MCF 10A (cell line): ENCODE measurements at regions of chr2 and their contacts with region 1.

Region 1: GRCh38 chr2:3480352-3481012 is 38.8 kb downstream of the ADI1 start:
- DNase-seq: no peak
- H3K4me3 Mint-ChIP-seq: no peak overlapping the region
- H3K27ac Mint-ChIP-seq: no peak overlapping the region
- H3K4me1 Mint-ChIP-seq: no peaks in the 10 kb centered on the region
- H3K27me3 Mint-ChIP-seq: no peaks in the 10 kb centered on the region
- CTCF ChIP-seq: no peak

Region 2: GRCh38 chr2:3470166-3470651 is 10.3 kb before region 1 on chr2:
- CTCF ChIA-PET with region 1: interaction called, 6 read pairs
- POLR2A ChIA-PET with region 1: interaction called, 14 read pairs
- intact Hi-C with region 1: no loop called
- DNase-seq: peak; percentile 82
- H3K4me3 Mint-ChIP-seq: peak overlapping the region; percentile 66
- H3K27ac Mint-ChIP-seq: peak overlapping the region; percentile 95
- H3K4me1 Mint-ChIP-seq: peaks cover 51% of the 10 kb centered on the region
- H3K27me3 Mint-ChIP-seq: no peaks in the 10 kb centered on the region
- CTCF ChIP-seq: no peak